ENCODE measurements at regions of chr13 and their contacts with region 1.

Region 1: DNA sequence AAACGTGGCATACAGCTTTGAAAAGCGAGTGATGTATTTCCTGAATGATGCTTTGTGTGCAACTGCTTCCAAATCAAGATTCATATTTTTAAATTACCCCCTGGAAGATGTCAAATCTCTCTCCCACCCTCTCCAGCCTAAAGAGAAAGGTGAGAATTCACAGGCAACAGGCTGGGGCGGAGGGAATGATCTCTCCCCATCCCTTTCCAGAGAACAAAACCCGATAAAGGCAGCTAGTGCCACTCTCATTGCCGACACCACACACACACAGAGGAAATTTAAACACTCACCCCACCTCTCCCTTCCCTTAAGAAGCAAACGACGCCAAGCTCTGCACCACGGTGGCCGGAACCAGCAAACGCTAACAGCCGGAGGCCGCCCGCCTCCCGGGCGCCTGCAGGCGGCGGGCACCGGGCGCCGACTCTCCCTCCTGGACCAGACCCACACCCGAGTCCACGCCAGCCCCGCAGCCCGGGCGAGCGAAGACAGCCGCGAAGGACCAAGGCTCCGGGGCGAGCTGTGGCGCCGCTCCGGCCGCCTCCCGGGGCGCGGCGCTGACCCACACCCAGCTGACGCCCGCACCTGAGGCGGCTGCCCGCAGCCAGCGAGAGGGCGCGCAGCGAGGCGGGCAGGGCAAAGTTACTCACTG is 477 bp downstream of the LNX2 start:
- DNase-seq: peak; percentile 89

Region 2: DNA sequence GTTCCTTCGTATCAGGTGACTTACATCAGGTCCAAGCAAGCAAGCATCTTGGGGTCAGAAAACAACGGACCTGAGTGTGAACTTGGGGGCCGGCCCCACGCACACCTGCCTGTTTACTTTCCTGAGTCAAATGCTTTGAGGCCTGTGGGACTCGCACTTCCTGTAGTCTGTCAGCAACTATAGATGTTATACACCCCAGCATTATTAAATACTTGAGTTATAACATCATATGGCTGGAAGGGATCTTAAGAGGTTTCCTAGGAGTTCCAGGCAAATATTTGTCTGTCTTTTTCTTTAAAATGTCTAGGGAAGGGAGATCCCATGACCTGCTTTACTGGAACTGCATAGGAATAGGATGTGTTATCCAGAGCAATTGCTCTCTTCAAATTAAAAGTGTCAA is 1848.7 kb before region 1 on chr13:
- intact Hi-C with region 1: no loop called
- DNase-seq: no peak

Region 3: GRCh38 chr13:27449936-27450828 is 169.7 kb before region 1 on chr13 and contains the start of gene MTIF3:
- intact Hi-C with region 1: loop called in 1 of 2 experiments (anchors 10 kb)
- DNase-seq: peak; percentile 97
- total RNA-seq, gene MTIF3: 32.9 to 39.4 TPM